Natural killer cell (primary cell): ENCODE measurements at regions of chr17 and their contacts with region 1.

Region 1: GRCh38 chr17:49788478-49789242 is at the start of gene KAT7:
- DNase-seq: peak; percentile 98 to 100
- ATAC-seq: peak; percentile 80 to 94 (median 85)
- H3K4me3 ChIP-seq: peak within 1 kb of the TSS; percentile 100
- H3K4me3 Mint-ChIP-seq: peak within 1 kb of the TSS; percentile 99
- H3K27ac ChIP-seq: peak within 1 kb of the TSS; percentile 100
- H3K27ac Mint-ChIP-seq: peak within 1 kb of the TSS; percentile 99
- H3K4me1 ChIP-seq: peaks cover 22% of the 10 kb centered on the region
- H3K4me1 Mint-ChIP-seq: peaks cover 52 to 55% of the 10 kb centered on the region in 2 donors
- H3K27me3 ChIP-seq: no peaks in the 10 kb centered on the region
- H3K27me3 Mint-ChIP-seq: no peaks in the 10 kb centered on the region
- CTCF ChIP-seq: no peak
- total RNA-seq, gene KAT7: 195 to 231 (median 213) TPM

Region 2: DNA sequence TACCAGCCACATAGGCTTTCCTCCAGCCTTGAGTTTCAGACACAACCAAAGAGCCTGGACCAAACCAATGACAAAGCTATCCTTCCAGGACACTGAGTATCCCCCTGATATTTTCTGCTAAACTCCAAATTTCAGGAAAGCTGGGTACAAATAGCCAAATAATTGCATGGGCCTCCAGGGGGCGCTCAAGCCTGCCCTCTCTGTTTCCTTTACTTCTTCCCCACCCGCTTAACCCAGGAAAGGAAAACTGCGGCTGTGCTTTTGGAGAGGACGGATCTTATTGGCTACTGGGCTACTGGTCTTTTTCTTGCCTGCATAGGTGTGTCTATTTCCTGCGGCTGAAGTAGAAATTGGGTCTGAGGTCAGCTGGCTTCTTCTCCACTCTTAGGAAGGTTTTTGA is 608.4 kb before region 1 on chr17:
- intact Hi-C with region 1: no loop called
- DNase-seq: peak; percentile 66 to 84
- ATAC-seq: peak; percentile 69 to 73 (median 72)
- H3K4me3 ChIP-seq: no peak overlapping the region
- H3K4me3 Mint-ChIP-seq: peak overlapping the region; percentile 67
- H3K27ac ChIP-seq: no peak overlapping the region
- H3K27ac Mint-ChIP-seq: peak overlapping the region in 1 of 2 donors; percentile 56
- H3K4me1 ChIP-seq: peaks cover 16% of the 10 kb centered on the region
- H3K4me1 Mint-ChIP-seq: peaks cover 9 to 13% of the 10 kb centered on the region in 2 donors
- H3K27me3 ChIP-seq: no peaks in the 10 kb centered on the region
- H3K27me3 Mint-ChIP-seq: peaks cover 3% of the 10 kb centered on the region in 2 donors
- CTCF ChIP-seq: peak; percentile 98

Region 3: DNA sequence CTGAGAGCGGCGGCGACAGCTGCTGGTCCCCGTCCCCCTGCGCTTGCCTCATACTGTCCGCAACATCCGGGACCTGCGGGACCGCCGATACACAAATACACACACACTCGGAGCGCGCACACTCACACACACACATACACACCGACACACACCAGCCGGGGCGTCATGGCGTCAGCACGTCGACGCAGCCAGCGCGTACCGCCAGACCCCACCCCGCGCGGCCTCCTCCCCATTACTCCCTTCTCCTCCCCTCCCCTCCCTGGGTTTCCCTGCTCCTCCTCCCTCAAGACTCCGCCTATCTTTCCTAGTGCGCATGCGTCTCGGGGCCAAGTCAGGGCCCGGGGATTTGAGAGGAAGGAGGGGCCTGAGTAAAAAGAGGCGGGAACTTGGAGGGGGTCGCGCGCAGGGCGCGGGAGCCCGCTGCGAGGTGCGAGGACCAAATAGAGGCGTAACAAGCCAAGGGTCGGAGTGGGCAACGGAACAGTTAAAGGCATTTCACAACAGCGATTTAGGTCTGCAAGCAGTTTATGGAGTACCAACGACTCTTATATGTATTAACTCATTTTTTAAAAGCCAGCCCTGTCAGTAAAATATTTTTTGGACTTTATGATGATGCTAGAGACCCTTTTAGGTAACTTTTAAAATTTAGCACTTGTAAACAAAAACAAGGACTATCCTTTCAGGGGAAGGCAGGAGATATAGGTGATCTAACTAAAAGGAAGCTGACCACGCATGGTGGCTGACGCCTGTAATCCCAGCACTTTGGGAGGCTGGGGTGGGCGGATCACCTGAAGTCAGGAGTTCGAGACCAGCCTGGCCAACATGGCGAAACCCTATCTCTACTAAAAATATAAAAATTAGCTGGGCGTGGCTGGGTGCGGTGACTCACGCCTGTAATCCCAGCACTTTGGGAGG is 110.5 kb before region 1 on chr17 and contains the start of gene SPOP:
- intact Hi-C with region 1: loop called (anchors 1 kb)
- DNase-seq: peak; percentile 96 to 100
- ATAC-seq: peak; percentile 92 to 99 (median 93)
- H3K4me3 ChIP-seq: peak within 1 kb of the TSS; percentile 88
- H3K4me3 Mint-ChIP-seq: peak within 1 kb of the TSS; percentile 97
- H3K27ac ChIP-seq: peak within 1 kb of the TSS; percentile 99
- H3K27ac Mint-ChIP-seq: peak within 1 kb of the TSS; percentile 97 to 98
- H3K4me1 ChIP-seq: peaks cover 18% of the 10 kb centered on the region
- H3K4me1 Mint-ChIP-seq: peaks cover 43 to 45% of the 10 kb centered on the region in 2 donors
- H3K27me3 ChIP-seq: no peaks in the 10 kb centered on the region
- H3K27me3 Mint-ChIP-seq: peaks cover 0 to 2% of the 10 kb centered on the region in 2 donors
- CTCF ChIP-seq: no peak
- total RNA-seq, gene SPOP: 45.4 to 56.5 (median 54.7) TPM

Region 4: GRCh38 chr17:49715717-49716279 is 72.9 kb before region 1 on chr17:
- intact Hi-C with region 1: loop called (anchors 1 kb)
- DNase-seq: peak; percentile 65 to 84
- ATAC-seq: peak; percentile 61 to 78 (median 71)
- H3K4me3 ChIP-seq: no peak overlapping the region
- H3K4me3 Mint-ChIP-seq: peak overlapping the region; percentile 76
- H3K27ac ChIP-seq: peak overlapping the region; percentile 89
- H3K27ac Mint-ChIP-seq: peak overlapping the region; percentile 97 to 98
- H3K4me1 ChIP-seq: peaks cover 64% of the 10 kb centered on the region
- H3K4me1 Mint-ChIP-seq: peaks cover 55 to 60% of the 10 kb centered on the region in 2 donors
- H3K27me3 ChIP-seq: no peaks in the 10 kb centered on the region
- H3K27me3 Mint-ChIP-seq: no peaks in the 10 kb centered on the region
- CTCF ChIP-seq: no peak

Region 5: DNA sequence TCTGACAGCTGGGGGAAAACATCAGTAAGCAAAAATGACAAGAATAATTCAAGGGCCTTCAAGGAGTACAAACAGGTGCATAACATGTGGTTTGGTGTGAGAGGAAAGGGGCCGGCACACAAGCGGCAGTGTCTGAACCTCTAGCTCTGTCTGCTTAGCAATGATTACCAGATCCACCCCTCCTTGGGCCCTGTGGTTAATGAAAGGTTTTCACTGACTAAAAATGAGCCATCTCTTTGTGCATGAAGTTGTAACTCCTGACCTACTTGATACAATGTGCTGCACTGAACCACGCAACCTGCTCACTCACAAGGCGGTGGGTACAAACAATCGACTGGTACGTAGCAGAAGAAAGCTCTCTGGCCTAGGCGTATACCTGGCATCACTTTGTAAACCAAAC is 39.9 kb before region 1 on chr17:
- intact Hi-C with region 1: loop called (anchors 2 kb)
- DNase-seq: peak; percentile 45 to 82
- ATAC-seq: peak; percentile 72 to 83 (median 81)
- H3K4me3 ChIP-seq: no peak overlapping the region
- H3K4me3 Mint-ChIP-seq: peak overlapping the region; percentile 81
- H3K27ac ChIP-seq: peak overlapping the region; percentile 92
- H3K27ac Mint-ChIP-seq: peak overlapping the region; percentile 93 to 97
- H3K4me1 ChIP-seq: peaks cover 78% of the 10 kb centered on the region
- H3K4me1 Mint-ChIP-seq: peaks cover 73 to 76% of the 10 kb centered on the region in 2 donors
- H3K27me3 ChIP-seq: no peaks in the 10 kb centered on the region
- H3K27me3 Mint-ChIP-seq: no peaks in the 10 kb centered on the region
- CTCF ChIP-seq: no peak